ENCODE measurements at regions of chr3 and their contacts with region 1.

Region 1: GRCh38 chr3:134373994-134374790 is at the start of gene AMOTL2:
- DNase-seq: peak; percentile 88 to 92
- ATAC-seq: peak; percentile 83 to 85
- H3K4me3 ChIP-seq: peak within 1 kb of the TSS; percentile 70 to 88 (median 77)
- H3K27ac ChIP-seq: peak within 1 kb of the TSS; percentile 93 to 99 (median 97)
- H3K4me1 ChIP-seq: peaks cover 37 to 63% of the 10 kb centered on the region in 2 donors
- H3K27me3 ChIP-seq: no peaks in the 10 kb centered on the region
- CTCF ChIP-seq: peak in 1 of 5 experiments; percentile 10
- POLR2A ChIP-seq: peak; percentile 75 to 88
- total RNA-seq, gene AMOTL2: 17.9 to 29.9 (median 20.6) TPM

Region 2: DNA sequence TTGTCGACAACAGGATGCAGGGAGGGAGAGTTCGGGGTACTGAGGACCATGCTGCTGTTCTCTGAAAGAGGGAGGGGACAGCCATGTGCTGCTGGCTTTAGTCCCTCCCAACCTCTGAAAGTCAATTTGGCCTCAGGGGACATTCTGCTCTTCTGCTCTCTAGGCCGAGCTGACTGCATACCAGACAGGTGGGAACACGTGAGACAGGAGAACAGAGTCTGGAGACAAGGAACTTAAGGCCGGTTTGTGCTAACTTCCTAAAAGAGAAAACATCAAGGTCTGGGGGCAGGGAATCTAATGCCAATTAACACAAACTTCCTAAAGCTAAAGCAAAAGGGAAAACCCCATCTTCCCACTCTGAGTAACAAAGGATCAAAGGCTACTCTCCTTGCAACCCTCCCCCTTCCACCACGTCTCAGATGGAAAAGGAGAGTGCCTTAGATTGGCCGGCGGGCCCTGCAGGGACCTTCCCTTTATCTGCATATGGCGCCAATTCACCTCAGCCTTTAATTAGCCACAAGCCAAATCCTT is 385.5 kb before region 1 on chr3:
- in situ Hi-C with region 1: no loop called
- intact Hi-C with region 1: no loop called
- DNase-seq: no peak
- ATAC-seq: no peak
- H3K4me3 ChIP-seq: no peak overlapping the region
- H3K27ac ChIP-seq: no peak overlapping the region
- H3K4me1 ChIP-seq: peaks cover 0 to 8% of the 10 kb centered on the region in 2 donors
- H3K27me3 ChIP-seq: no peaks in the 10 kb centered on the region
- CTCF ChIP-seq: no peak
- POLR2A ChIP-seq: no peak

Region 3: GRCh38 chr3:134197681-134198261 is 176.4 kb before region 1 on chr3:
- in situ Hi-C with region 1: no loop called
- intact Hi-C with region 1: loop called (anchors 1 kb)
- DNase-seq: no peak
- ATAC-seq: peak; percentile 42 to 71
- H3K4me3 ChIP-seq: no peak overlapping the region
- H3K27ac ChIP-seq: no peak overlapping the region
- H3K4me1 ChIP-seq: no peaks in the 10 kb centered on the region
- H3K27me3 ChIP-seq: no peaks in the 10 kb centered on the region
- CTCF ChIP-seq: peak; percentile 24 to 69 (median 53)
- POLR2A ChIP-seq: no peak

Region 4: DNA sequence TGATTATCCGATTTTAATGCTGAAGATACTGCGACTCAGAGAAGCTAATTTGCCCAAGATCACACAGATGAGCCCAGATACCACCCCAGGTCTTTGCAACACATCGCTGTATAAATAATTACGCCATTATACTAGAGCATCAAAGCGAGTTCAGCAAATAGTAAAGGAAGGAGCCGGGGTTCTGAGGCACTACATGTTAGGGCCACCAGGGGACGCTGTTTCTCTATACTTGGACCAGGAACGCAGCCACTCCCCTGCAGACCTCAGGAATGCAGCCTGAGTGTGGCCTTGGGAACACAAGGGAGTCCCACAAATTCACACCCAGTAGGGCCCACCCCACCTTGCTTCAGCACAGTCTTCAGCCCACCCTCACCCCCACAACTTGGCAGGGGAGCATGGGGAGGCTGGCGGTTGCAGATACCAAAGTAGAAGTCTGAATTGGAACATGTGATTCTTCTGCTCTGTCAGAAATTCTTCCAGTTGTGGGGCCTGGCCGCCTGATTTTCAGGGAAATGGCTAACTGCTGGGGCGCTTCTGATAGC is 65.8 kb before region 1 on chr3:
- in situ Hi-C with region 1: loop called (anchors 5 kb)
- intact Hi-C with region 1: loop called (anchors 1 kb)
- DNase-seq: peak; percentile 62 to 82
- ATAC-seq: peak; percentile 74 to 79
- H3K4me3 ChIP-seq: no peak overlapping the region
- H3K27ac ChIP-seq: peak overlapping the region; percentile 3 to 82 (median 22)
- H3K4me1 ChIP-seq: peaks cover 6 to 15% of the 10 kb centered on the region in 2 donors
- H3K27me3 ChIP-seq: no peaks in the 10 kb centered on the region
- CTCF ChIP-seq: peak; percentile 99 to 100 (median 99)
- POLR2A ChIP-seq: no peak

Region 5: DNA sequence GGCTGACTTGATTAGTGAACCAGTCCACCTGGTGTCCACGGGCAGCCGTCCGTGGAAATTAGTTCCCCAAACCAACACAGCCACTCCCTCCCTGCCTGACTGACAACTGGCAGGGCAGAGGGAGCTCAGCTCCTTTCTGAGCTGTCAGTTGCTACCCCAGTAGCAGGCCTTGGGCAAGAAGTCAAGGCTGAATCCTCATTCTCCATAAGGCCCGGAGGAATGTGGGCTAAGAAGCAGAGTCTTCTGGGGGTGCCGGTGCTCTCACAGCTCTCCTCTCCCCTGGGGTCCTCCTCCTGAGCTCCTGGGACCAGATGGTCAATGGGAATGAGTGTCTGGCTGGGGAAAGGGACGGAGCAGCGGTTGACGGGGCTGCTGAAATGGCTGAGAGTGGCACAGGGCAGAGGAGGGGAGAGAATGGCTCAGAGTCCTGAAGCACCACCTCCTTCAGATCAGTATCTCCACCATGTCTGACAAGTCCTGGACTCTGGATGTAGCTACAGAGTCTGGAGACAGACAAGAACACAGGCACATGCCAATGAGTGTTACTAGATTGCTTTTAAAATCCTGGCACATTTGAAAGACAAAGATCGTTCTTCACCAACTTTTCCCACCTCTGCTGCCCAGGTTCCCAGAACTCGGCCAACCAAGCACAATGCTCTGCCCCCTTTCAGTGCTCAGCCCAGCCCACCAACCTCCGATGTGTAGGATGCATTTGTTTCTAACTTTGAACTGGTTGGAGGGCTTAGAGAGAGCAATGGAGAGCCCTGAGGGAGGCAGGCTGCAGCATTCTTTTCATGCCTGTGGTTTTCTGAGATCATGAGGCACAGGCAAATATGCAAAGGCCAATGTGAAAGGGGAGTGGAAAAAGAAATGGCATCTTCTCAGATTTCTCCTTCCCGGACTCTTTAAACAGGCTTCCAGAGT is 16.7 kb before region 1 on chr3:
- in situ Hi-C with region 1: no loop called
- intact Hi-C with region 1: no loop called
- DNase-seq: peak in 1 of 2 donors; percentile 61
- ATAC-seq: peak; percentile 59 to 75
- H3K4me3 ChIP-seq: no peak overlapping the region
- H3K27ac ChIP-seq: peak overlapping the region; percentile 53 to 99 (median 80)
- H3K4me1 ChIP-seq: peaks cover 79 to 88% of the 10 kb centered on the region in 2 donors
- H3K27me3 ChIP-seq: no peaks in the 10 kb centered on the region
- CTCF ChIP-seq: no peak
- POLR2A ChIP-seq: no peak

Region 6: GRCh38 chr3:134485718-134486576 is 111.8 kb after region 1 on chr3 and contains the starts of genes ANAPC13 and CEP63:
- in situ Hi-C with region 1: no loop called
- intact Hi-C with region 1: loop called (anchors 2 kb)
- DNase-seq: peak; percentile 90 to 95
- ATAC-seq: peak; percentile 92 to 93
- H3K4me3 ChIP-seq: peak within 1 kb of the TSS; percentile 68 to 99 (median 90)
- H3K27ac ChIP-seq: peak within 1 kb of the TSS; percentile 93 to 99 (median 97)
- H3K4me1 ChIP-seq: peaks cover 35% of the 10 kb centered on the region in 2 donors
- H3K27me3 ChIP-seq: no peaks in the 10 kb centered on the region
- CTCF ChIP-seq: no peak
- POLR2A ChIP-seq: peak; percentile 65 to 72
- total RNA-seq, gene ANAPC13: 32.3 to 82.2 (median 78.7) TPM
- total RNA-seq, gene CEP63: 21.4 to 23.5 (median 22.4) TPM